HCT116 (cell line): ENCODE measurements at regions of chr18 and their contacts with region 1.

Region 1: DNA sequence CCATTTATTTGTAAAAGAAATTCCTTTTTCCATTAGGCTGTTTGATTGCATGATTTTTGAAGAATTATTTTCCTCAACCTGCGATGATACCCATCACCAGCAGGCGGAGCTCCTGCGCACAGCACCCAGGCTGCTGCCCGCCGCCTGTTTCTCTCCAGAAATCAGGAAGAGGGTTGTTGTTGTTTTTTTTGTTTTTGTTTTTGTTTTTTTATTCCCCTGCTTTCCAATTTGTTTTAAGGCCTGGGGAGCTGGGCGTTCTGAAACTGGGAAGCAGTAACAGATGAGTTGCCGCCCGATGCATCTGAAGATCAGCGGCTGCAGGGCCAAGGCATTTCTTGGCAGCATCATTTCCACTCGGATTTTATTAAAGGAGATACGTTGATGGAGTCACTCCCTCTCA is 132.1 kb downstream of the MBP start:
- DNase-seq: no peak
- ATAC-seq: peak; percentile 55
- H3K4me3 ChIP-seq: no peak overlapping the region
- H3K27ac ChIP-seq: no peak overlapping the region
- H3K4me1 ChIP-seq: no peaks in the 10 kb centered on the region
- H3K27me3 ChIP-seq: 0 out of 2 replicates have a peak, but pooled peaks cover 3% of the 10 kb centered on the region
- CTCF ChIP-seq: peak; percentile 88 to 98 (median 97)
- POLR2A ChIP-seq: no peak
- RAD21 ChIP-seq: peak; percentile 88

Region 2: GRCh38 chr18:76914314-76914713 is 86.2 kb before region 1 on chr18:
- CTCF ChIA-PET with region 1: no interaction called
- POLR2A ChIA-PET with region 1: no interaction called
- RAD21 ChIA-PET with region 1: no interaction called
- intact Hi-C with region 1: no loop called
- DNase-seq: no peak
- ATAC-seq: no peak
- H3K4me3 ChIP-seq: no peak overlapping the region
- H3K27ac ChIP-seq: no peak overlapping the region
- H3K4me1 ChIP-seq: no peaks in the 10 kb centered on the region
- H3K27me3 ChIP-seq: no peaks in the 10 kb centered on the region
- CTCF ChIP-seq: no peak
- POLR2A ChIP-seq: no peak
- RAD21 ChIP-seq: no peak

Region 3: GRCh38 chr18:77054606-77055428 is 54.3 kb after region 1 on chr18:
- CTCF ChIA-PET with region 1: no interaction called
- POLR2A ChIA-PET with region 1: no interaction called
- RAD21 ChIA-PET with region 1: no interaction called
- intact Hi-C with region 1: loop called (anchors 10 kb)
- DNase-seq: no peak
- ATAC-seq: no peak
- H3K4me3 ChIP-seq: no peak overlapping the region
- H3K27ac ChIP-seq: no peak overlapping the region
- H3K4me1 ChIP-seq: peaks cover 0 to 5% of the 10 kb centered on the region in 2 experiments; a peak in 1 of 4 replicates
- H3K27me3 ChIP-seq: no peaks in the 10 kb centered on the region
- CTCF ChIP-seq: no peak
- POLR2A ChIP-seq: no peak
- RAD21 ChIP-seq: no peak

Region 4: GRCh38 chr18:77079954-77080682 is 79.6 kb after region 1 on chr18:
- CTCF ChIA-PET with region 1: no interaction called
- POLR2A ChIA-PET with region 1: no interaction called
- RAD21 ChIA-PET with region 1: no interaction called
- intact Hi-C with region 1: no loop called
- DNase-seq: no peak
- ATAC-seq: no peak
- H3K4me3 ChIP-seq: no peak overlapping the region
- H3K27ac ChIP-seq: no peak overlapping the region
- H3K4me1 ChIP-seq: peaks cover 39 to 52% of the 10 kb centered on the region in 2 experiments
- H3K27me3 ChIP-seq: no peaks in the 10 kb centered on the region
- CTCF ChIP-seq: no peak
- POLR2A ChIP-seq: no peak
- RAD21 ChIP-seq: no peak

Region 5: DNA sequence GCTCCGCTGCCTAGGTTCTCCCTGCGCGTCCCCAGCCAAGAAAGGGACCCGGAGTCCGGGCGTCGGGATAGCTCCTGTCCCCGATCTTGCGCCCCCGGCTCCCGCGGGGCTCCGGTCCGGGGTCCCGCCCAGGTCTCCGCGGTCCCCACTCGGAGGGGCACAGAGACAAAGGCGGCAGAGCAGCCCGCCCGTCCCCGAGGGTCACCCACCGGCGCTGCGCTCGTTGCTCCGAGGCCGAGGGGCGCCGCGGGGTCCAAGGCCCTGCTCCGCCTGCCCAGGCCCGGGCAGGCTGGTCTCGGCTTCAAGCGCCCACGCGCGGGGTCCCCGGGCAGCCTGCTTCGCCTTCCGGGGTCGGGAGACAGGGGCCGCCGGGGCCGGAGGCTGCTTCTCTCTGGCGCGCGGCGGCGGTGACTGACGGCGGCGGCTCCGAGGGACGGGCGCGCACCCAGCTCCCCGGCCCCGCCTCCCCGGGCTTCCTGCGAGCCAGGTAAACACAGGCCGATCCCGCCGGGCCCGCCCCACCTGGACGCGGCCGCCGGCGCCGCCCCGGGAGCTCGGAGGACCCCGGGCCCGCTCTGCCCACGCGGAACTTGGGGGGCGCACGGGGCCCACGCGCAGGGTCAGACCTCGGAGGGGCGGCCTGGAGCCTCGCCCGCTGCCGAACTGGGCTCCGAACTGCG is 132.0 kb after region 1 on chr18 and contains the start of gene MBP:
- CTCF ChIA-PET with region 1: no interaction called
- POLR2A ChIA-PET with region 1: no interaction called
- RAD21 ChIA-PET with region 1: no interaction called
- intact Hi-C with region 1: loop called (anchors 10 kb)
- DNase-seq: no peak
- ATAC-seq: peak; percentile 83
- H3K4me3 ChIP-seq: peak within 1 kb of the TSS; percentile 71 to 79
- H3K27ac ChIP-seq: peak within 1 kb of the TSS; percentile 90
- H3K4me1 ChIP-seq: peaks cover 27 to 51% of the 10 kb centered on the region in 2 experiments
- H3K27me3 ChIP-seq: no peaks in the 10 kb centered on the region
- CTCF ChIP-seq: no peak
- POLR2A ChIP-seq: peak; percentile 66
- RAD21 ChIP-seq: no peak
- total RNA-seq, gene MBP: 34.9 TPM

Region 6: DNA sequence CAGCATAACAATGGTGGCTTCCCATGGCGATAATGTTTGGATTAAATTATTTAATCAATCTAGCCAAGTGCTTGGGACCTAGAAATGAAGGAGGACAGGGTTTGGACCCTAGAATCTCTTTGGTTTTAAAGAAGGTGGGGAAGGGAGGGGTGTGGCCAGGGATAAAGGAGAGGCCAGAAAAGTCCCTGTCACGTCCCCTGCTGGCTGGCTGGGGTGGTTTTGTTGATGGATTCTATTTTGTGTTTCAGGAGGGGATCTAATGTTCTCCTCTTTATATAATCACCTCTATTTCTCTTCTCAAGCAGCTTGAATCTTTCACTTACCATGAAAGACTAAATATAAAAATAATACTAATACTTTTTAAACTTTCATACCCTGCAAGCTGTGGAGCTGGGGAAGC is 196.5 kb after region 1 on chr18:
- CTCF ChIA-PET with region 1: interaction called, 3 read pairs
- POLR2A ChIA-PET with region 1: no interaction called
- RAD21 ChIA-PET with region 1: no interaction called
- intact Hi-C with region 1: loop called (anchors 5 kb)
- DNase-seq: peak; percentile 13
- ATAC-seq: peak; percentile 80
- H3K4me3 ChIP-seq: no peak overlapping the region
- H3K27ac ChIP-seq: no peak overlapping the region
- H3K4me1 ChIP-seq: peaks cover 0 to 9% of the 10 kb centered on the region in 2 experiments; a peak in 2 of 4 replicates
- H3K27me3 ChIP-seq: no peaks in the 10 kb centered on the region
- CTCF ChIP-seq: peak; percentile 47 to 56 (median 49); a peak in 5 of 6 replicates
- POLR2A ChIP-seq: no peak
- RAD21 ChIP-seq: peak; percentile 49; the same call in 1 of the 2 replicates

Region 7: GRCh38 chr18:77207540-77207939 is 207.0 kb after region 1 on chr18:
- CTCF ChIA-PET with region 1: interaction called, 25 read pairs
- POLR2A ChIA-PET with region 1: no interaction called
- RAD21 ChIA-PET with region 1: interaction called, 3 read pairs
- intact Hi-C with region 1: loop called (anchors 1 kb)
- DNase-seq: peak; percentile 51
- ATAC-seq: peak; percentile 94
- H3K4me3 ChIP-seq: no peak overlapping the region
- H3K27ac ChIP-seq: no peak overlapping the region
- H3K4me1 ChIP-seq: peaks cover 8 to 14% of the 10 kb centered on the region in 2 experiments
- H3K27me3 ChIP-seq: no peaks in the 10 kb centered on the region
- CTCF ChIP-seq: peak; percentile 61 to 88 (median 82); a peak in 5 of 6 replicates
- POLR2A ChIP-seq: no peak
- RAD21 ChIP-seq: 0 out of 2 replicates have a peak, but pooled peaks have one; percentile 17

Region 8: DNA sequence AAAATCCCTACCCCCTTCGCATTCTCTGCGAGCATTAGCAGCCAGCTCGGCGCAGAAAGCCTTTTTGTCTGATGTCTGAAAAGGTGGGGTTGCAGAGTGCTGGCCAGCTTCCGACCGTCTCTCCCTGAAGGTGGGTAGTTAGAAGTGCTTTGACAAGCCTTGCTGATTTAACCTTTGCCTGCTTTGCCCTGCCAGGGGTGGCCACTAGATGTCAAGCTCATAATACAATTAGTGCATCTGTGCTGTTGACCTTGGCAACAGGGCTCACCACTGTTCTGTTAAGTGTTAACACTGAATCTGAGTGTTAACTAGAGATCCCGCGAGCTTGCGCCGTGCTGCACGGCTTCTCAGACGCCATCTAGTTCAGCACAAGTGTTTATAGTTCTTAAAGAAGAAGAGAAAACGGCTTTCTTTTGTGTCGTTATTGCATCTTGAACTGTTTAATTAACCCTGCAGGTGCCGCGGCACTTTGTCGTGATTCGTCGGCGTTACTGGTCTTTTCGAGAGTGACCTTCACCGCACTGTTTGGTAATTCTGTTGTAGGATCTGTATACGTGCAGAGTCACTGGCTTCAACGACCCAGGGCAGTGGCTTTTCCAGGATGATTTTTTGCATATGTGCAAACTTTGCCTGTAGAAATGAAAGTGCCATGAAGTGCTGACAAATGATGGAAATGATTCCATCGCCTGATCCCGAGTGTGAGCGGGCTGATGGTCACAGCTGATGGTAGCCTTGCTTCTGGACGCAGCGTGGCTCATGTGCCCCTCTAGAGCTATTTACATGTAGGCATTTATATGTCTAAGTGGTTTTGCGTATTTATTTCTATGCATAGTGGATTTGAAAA is 1984.6 kb after region 1 on chr18:
- CTCF ChIA-PET with region 1: no interaction called
- POLR2A ChIA-PET with region 1: no interaction called
- RAD21 ChIA-PET with region 1: no interaction called
- intact Hi-C with region 1: loop called (anchors 10 kb)
- DNase-seq: no peak
- ATAC-seq: peak; percentile 44; the same call in 1 of the 2 replicates
- H3K4me3 ChIP-seq: no peak overlapping the region
- H3K27ac ChIP-seq: no peak overlapping the region
- H3K4me1 ChIP-seq: no peaks in the 10 kb centered on the region
- H3K27me3 ChIP-seq: peaks cover 15% of the 10 kb centered on the region
- CTCF ChIP-seq: peak; percentile 12 to 39 (median 32); a peak in 2 of 6 replicates
- POLR2A ChIP-seq: no peak
- RAD21 ChIP-seq: peak; percentile 46